ENCODE measurements at regions of chr18 and their contacts with region 1.

Region 1: DNA sequence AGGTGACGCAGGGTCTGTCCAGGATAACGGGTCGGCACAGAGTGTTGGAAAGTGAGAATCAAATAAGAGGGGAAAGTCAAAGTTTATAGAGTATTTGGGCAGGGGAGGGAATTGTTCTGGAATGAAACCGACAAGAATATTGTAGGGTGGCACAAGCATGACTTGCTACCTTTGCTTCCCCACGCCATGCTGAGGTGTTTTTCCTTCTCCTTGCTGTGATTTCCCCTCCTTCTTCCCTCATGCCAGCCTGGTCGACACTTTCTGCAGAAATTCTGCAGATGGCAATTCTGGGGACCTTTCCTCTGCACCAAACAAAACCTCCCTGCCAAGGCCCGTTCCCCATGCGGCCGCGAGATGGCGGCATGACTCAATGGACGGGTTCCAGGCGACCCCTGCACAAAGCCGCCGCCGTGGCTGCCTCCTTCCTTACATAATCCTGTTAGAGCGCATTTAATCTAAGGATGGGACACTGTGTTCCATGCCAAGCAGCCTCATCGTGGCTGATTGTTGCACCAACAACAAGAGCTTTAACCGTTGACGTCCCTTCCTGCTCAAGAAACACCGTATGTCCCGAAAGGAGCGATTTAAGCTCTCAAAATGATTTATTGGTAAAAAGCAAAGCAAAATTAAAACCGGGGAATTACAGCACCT is at the start of gene MRO:
- DNase-seq: peak; percentile 69 to 74 (median 70)
- H3K4me3 ChIP-seq: peak within 1 kb of the TSS; percentile 42 to 79 (median 71)
- H3K4me3 Mint-ChIP-seq: no peak within 1 kb of the TSS
- H3K27ac ChIP-seq: peak within 1 kb of the TSS in 1 of 2 donors; percentile 76
- H3K27ac Mint-ChIP-seq: no peak within 1 kb of the TSS
- H3K4me1 ChIP-seq: peaks cover 23 to 28% of the 10 kb centered on the region in 2 donors
- H3K4me1 Mint-ChIP-seq: no peaks in the 10 kb centered on the region
- H3K27me3 ChIP-seq: no peaks in the 10 kb centered on the region
- H3K27me3 Mint-ChIP-seq: peaks cover 0 to 5% (median 0%) of the 10 kb centered on the region in 3 donors
- CTCF ChIP-seq: peak; percentile 91
- polyA plus RNA-seq, gene MRO: 0.01 TPM in 1 of 3 donors, not detected in the others

Region 2: DNA sequence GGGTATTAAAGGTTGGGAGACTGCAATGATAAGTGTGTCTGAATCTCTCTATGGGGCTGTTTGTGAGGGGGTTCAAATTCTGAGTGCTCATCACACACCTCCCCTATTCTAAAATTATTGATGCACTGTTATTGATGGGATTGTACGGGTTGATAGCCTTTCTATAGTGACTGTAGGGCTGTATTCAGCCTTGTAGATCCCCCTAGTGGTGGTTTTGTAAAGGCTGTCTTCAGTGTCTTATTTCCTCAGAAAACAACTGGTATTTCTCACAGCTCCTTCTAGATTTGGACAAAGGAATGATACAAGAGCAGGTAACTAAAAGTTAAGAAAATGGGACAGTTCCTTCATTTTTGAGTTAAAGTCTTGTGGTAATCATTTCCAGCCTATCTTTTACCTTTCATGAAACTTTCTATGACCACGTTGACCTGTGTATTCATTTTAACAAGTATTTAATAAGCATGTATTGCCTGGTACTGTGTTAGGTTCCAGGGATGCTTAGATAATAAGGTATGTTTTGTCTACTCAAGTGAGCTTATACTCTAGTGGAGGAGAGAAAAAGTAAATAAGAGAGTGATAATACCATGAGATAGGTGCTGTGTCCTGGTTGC is 231.4 kb after region 1 on chr18:
- intact Hi-C with region 1: loop called (anchors 2 to 5 kb)
- DNase-seq: peak; percentile 27 to 57 (median 50)
- H3K4me3 ChIP-seq: no peak overlapping the region
- H3K4me3 Mint-ChIP-seq: no peak overlapping the region
- H3K27ac ChIP-seq: peak overlapping the region in 1 of 2 donors; percentile 35
- H3K27ac Mint-ChIP-seq: peak overlapping the region in 4 of 7 donors; percentile 10 to 79 (median 40)
- H3K4me1 ChIP-seq: no peaks in the 10 kb centered on the region
- H3K4me1 Mint-ChIP-seq: peaks cover 8% of the 10 kb centered on the region
- H3K27me3 ChIP-seq: no peaks in the 10 kb centered on the region
- H3K27me3 Mint-ChIP-seq: no peaks in the 10 kb centered on the region
- CTCF ChIP-seq: peak; percentile 88

Region 3: DNA sequence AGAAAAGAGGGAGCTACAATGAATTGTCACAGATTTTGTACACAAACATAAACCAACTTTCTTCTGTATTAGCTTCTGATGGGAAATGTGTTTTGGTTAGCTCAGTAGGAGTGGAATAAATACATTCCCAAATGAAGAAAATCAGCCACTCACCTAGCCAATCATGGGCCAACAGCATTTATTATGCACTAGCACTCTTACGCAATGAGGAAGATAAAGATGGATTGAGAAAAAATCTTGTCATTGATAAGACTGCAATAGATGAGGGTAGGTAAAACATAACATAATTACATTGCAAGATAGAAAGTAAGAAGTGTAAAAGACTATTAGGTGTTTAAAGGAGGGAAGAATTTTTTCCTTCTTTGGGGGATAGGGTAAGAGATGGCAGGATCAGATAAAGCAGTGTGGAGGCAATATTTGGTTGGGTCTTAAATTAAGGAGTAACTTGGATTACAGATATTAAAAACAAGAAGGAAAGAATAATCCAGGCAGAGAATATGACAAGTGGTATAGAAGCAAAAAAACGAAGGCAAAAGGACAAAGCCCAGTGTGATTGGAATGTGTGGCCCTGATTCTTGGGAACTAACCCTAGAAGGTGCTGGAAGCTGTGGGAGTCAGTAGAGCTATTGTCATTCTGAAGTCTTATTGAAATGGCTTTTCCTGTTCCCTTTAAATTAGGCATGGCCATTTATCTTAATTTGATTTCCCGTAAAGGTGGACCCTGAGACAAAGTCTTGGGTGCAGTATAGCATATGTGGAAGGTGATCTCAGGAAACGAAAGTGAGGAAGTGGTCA is 586.0 kb after region 1 on chr18:
- intact Hi-C with region 1: no loop called
- DNase-seq: no peak
- H3K4me3 ChIP-seq: no peak overlapping the region
- H3K4me3 Mint-ChIP-seq: no peak overlapping the region
- H3K27ac ChIP-seq: no peak overlapping the region
- H3K27ac Mint-ChIP-seq: no peak overlapping the region
- H3K4me1 ChIP-seq: no peaks in the 10 kb centered on the region
- H3K4me1 Mint-ChIP-seq: no peaks in the 10 kb centered on the region
- H3K27me3 ChIP-seq: no peaks in the 10 kb centered on the region
- H3K27me3 Mint-ChIP-seq: peaks cover 0 to 3% (median 0%) of the 10 kb centered on the region in 3 donors
- CTCF ChIP-seq: no peak

Measured in CD14-positive monocyte (primary cell).